ENCODE measurements at regions of chr10 and their contacts with region 1.

Region 1: DNA sequence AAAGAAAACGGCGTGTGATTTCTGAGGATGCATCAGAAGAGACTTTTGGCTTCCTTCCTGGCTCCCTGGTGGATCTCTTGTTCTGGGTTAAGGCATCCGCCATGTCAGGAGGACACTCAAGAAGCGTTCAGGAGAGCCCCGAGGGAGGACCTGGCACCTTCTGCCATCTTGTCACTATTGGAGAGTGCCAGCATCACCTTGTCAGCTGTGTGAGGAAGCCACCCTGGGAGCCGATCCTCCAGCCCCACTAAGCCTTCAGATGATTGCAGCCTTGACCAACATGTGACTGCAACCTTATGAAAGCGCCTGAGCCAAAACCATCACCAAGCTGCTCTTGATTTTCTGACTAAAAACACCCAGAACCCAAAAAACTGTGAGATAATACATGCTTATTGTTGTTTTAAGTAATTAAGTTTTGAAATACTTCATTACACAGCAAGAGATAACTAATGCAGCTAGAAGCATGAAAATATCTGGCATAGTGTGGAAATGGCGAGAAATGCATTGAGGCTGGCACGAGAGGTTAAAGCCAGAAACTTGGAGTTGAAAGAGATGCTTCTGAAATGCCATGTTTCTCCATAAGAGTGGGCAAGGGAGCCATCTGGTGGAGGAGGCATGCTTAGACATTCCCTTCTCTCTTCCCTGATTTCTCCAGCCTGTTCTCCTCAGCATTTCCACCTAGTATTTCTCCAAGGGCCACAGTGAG is 5.4 kb upstream of the ZFYVE27 start:
- DNase-seq: peak; percentile 67 to 78
- H3K4me3 ChIP-seq: no peak overlapping the region
- H3K27ac ChIP-seq: no peak overlapping the region
- H3K4me1 ChIP-seq: no peaks in the 10 kb centered on the region
- H3K27me3 ChIP-seq: no peaks in the 10 kb centered on the region
- CTCF ChIP-seq: peak; percentile 77 to 97 (median 90)
- POLR2A ChIP-seq: no peak

Region 2: GRCh38 chr10:97543025-97543575 is 188.4 kb before region 1 on chr10:
- intact Hi-C with region 1: no loop called
- DNase-seq: peak; percentile 84 to 94
- H3K4me3 ChIP-seq: no peak overlapping the region
- H3K27ac ChIP-seq: peak overlapping the region; percentile 96 to 97
- H3K4me1 ChIP-seq: peaks cover 22 to 38% of the 10 kb centered on the region in 2 donors
- H3K27me3 ChIP-seq: no peaks in the 10 kb centered on the region
- CTCF ChIP-seq: no peak
- POLR2A ChIP-seq: peak in 1 of 2 donors; percentile 21

Region 3: GRCh38 chr10:97676770-97677581 is 54.5 kb before region 1 on chr10:
- intact Hi-C with region 1: loop called (anchors 5 kb)
- DNase-seq: peak; percentile 28 to 30
- H3K4me3 ChIP-seq: no peak overlapping the region
- H3K27ac ChIP-seq: no peak overlapping the region
- H3K4me1 ChIP-seq: no peaks in the 10 kb centered on the region
- H3K27me3 ChIP-seq: no peaks in the 10 kb centered on the region
- CTCF ChIP-seq: peak; percentile 70 to 87 (median 78)
- POLR2A ChIP-seq: no peak

Region 4: GRCh38 chr10:97796651-97797050 is 65.2 kb after region 1 on chr10:
- intact Hi-C with region 1: no loop called
- DNase-seq: no peak
- H3K4me3 ChIP-seq: no peak overlapping the region
- H3K27ac ChIP-seq: no peak overlapping the region
- H3K4me1 ChIP-seq: no peaks in the 10 kb centered on the region
- H3K27me3 ChIP-seq: no peaks in the 10 kb centered on the region
- CTCF ChIP-seq: no peak
- POLR2A ChIP-seq: no peak

Measured in uterus (tissue), 4 donors.